ENCODE measurements at regions of chr1 and their contacts with region 1.

Region 1: GRCh38 chr1:59007820-59008598 is 224.2 kb upstream of the JUN start:
- DNase-seq: peak; percentile 66
- H3K4me3 Mint-ChIP-seq: peak overlapping the region; percentile 64
- H3K27ac Mint-ChIP-seq: peak overlapping the region; percentile 90
- H3K4me1 Mint-ChIP-seq: peaks cover 50% of the 10 kb centered on the region
- H3K27me3 Mint-ChIP-seq: no peaks in the 10 kb centered on the region

Region 2: GRCh38 chr1:58857680-58858673 is 150.0 kb before region 1 on chr1:
- intact Hi-C with region 1: loop called (anchors 5 kb)
- DNase-seq: peak; percentile 81
- H3K4me3 Mint-ChIP-seq: peak overlapping the region; percentile 64
- H3K27ac Mint-ChIP-seq: peak overlapping the region; percentile 92
- H3K4me1 Mint-ChIP-seq: peaks cover 49% of the 10 kb centered on the region
- H3K27me3 Mint-ChIP-seq: peaks cover 2% of the 10 kb centered on the region

Region 3: DNA sequence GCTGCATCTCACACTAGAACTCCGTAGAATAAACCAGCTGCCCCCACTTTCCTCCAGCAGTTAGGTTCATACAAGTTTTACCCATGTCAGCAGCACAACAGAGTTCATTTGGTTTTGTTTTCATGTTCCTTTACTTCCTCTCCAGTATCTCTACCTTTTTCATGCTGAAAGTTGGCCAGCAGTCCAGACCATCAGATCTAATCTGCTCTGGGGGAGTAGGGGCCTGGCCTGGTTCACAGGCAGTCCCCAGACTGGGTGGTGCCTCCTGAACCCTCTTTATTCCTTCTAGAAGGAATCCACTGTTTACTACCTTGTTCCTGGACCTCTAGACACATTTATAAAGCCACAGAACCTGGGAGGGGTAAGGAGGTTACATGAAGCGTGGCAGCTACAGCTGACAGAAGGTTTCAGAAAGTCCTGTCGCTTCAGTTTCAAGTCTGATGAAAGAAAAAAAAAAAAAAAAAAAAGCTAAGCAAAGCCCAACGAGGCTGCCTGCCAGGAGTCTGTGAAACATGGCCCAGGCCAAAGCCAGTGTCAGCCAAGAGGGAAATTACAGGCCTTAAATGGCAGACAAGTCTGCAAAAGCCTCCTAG is 39.6 kb before region 1 on chr1:
- intact Hi-C with region 1: loop called (anchors 5 kb)
- DNase-seq: peak; percentile 85
- H3K4me3 Mint-ChIP-seq: peak overlapping the region; percentile 61
- H3K27ac Mint-ChIP-seq: peak overlapping the region; percentile 98
- H3K4me1 Mint-ChIP-seq: peaks cover 32% of the 10 kb centered on the region
- H3K27me3 Mint-ChIP-seq: no peaks in the 10 kb centered on the region

Region 4: DNA sequence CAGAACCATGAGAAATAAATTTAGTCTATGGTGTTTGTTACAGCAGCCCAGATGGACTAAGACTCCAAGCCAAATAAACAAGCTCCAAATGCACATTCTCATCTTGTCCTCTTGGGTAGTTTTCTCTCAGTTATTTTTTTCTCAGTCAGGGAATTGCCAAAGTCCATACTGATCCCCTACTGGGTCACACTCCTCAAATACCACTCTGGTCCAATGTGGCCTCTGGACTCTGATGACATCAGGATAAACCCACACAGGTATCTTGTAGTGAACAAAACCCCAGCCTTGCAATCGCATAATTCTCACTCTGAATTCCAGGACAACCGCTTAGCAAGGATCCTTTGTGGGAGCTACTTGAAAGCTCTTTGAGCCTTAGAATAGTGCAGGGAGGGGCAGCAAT is 24.2 kb after region 1 on chr1:
- intact Hi-C with region 1: no loop called
- DNase-seq: no peak
- H3K4me3 Mint-ChIP-seq: no peak overlapping the region
- H3K27ac Mint-ChIP-seq: no peak overlapping the region
- H3K4me1 Mint-ChIP-seq: peaks cover under 1% of the 10 kb centered on the region
- H3K27me3 Mint-ChIP-seq: no peaks in the 10 kb centered on the region

Region 5: GRCh38 chr1:59150577-59151391 is 142.8 kb after region 1 on chr1:
- intact Hi-C with region 1: loop called (anchors 5 kb)
- DNase-seq: peak; percentile 81
- H3K4me3 Mint-ChIP-seq: peak overlapping the region; percentile 35
- H3K27ac Mint-ChIP-seq: peak overlapping the region; percentile 51
- H3K4me1 Mint-ChIP-seq: peaks cover 33% of the 10 kb centered on the region
- H3K27me3 Mint-ChIP-seq: no peaks in the 10 kb centered on the region

Region 6: GRCh38 chr1:59432531-59433439 is 424.8 kb after region 1 on chr1:
- intact Hi-C with region 1: loop called (anchors 1 kb)
- DNase-seq: peak; percentile 53
- H3K4me3 Mint-ChIP-seq: no peak overlapping the region
- H3K27ac Mint-ChIP-seq: peak overlapping the region; percentile 38
- H3K4me1 Mint-ChIP-seq: peaks cover 34% of the 10 kb centered on the region
- H3K27me3 Mint-ChIP-seq: no peaks in the 10 kb centered on the region